Tibial artery (tissue), 4 donors: ENCODE measurements at regions of chr6 and their contacts with region 1.

Region 1: GRCh38 chr6:27838058-27838944 is 73.9 kb downstream of the OR2B2 start:
- DNase-seq: peak; percentile 68 to 88
- H3K4me3 ChIP-seq: peak overlapping the region; percentile 67 to 78
- H3K27ac ChIP-seq: peak overlapping the region; percentile 93 to 97
- H3K4me1 ChIP-seq: peaks cover 0 to 18% (median 8%) of the 10 kb centered on the region in 4 donors
- H3K27me3 ChIP-seq: no peaks in the 10 kb centered on the region
- CTCF ChIP-seq: peak in 1 of 2 experiments; percentile 37

Region 2: GRCh38 chr6:26025894-26026832 is 1812.1 kb before region 1 on chr6:
- intact Hi-C with region 1: loop called (anchors 10 kb)
- DNase-seq: peak; percentile 97 to 99
- H3K4me3 ChIP-seq: peak overlapping the region; percentile 69 to 76
- H3K27ac ChIP-seq: peak overlapping the region; percentile 93
- H3K4me1 ChIP-seq: peaks cover 0 to 17% (median 3%) of the 10 kb centered on the region in 4 donors
- H3K27me3 ChIP-seq: no peaks in the 10 kb centered on the region
- CTCF ChIP-seq: peak; percentile 80 to 81